Activated CD4-positive, alpha-beta T cell treated with anti-CD3 and anti-CD28 coated beads for 36 hours (primary cell): ENCODE measurements at regions of chr17 and their contacts with region 1.

Region 1: DNA sequence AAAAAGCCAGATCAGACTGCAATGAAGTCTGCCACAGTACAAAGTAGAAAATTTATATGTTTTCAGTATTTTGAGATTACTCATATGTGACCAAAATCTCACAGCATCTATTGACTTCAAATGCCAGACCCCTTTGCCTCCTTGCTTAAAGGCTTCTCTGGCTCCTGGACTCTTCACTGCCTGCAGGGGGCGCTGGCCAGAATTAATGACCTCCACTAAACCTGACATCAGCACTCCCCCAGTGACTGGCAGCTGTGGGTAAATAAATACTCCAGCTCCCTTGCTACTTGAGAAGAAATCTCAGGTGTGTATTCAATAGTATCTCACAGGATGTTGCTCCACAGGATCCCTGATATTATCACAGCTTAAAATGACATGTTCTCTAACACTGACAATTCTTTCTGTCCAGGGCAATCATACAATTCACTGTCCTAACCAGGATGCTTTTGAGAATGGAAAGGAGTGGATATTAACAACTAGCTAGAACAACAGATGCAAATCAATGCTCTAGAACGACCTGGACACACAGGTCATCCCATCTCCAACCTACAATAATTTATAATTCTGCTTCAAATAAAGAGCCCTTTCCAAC is 4.0 kb downstream of the BECN1 start:
- DNase-seq: peak; percentile 86
- ATAC-seq: peak; percentile 56
- H3K4me3 Mint-ChIP-seq: no peak overlapping the region
- H3K27ac Mint-ChIP-seq: no peak overlapping the region
- H3K4me1 Mint-ChIP-seq: peaks cover 28% of the 10 kb centered on the region
- H3K27me3 Mint-ChIP-seq: no peaks in the 10 kb centered on the region

Region 2: DNA sequence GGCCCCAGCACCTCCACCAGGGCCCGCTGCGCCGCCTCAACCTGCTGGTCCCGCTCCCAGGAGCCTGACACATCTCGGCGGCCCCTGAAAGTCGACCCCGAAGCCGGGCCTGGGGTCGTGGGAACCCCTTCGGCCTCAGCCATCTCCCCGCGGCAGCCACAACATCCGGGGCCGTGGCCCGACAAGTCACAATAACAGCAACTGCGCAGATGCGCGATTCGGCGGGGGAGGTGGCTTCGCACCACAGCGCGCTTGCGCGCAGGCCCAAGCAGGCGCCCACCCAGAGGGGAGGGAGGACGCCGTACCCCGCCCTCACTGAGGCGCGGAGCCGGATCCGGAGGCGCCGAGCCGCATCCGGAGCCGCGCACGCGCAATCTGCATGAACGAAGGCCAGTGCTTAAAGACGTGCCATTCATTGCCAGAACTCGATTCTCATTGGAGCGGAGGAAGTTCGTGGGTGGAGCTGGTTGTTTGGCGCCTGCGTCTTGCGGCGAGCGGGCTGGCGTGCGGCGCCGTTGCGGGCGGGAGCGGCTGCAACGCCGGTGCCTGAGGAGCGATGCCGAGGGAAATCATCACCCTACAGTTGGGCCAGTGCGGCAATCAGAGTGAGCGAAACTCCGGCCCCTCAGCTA is 210.7 kb before region 1 on chr17 and contains the starts of genes RETREG3 and TUBG1:
- CTCF ChIA-PET with region 1: interaction called, 3 read pairs
- POLR2A ChIA-PET with region 1: interaction called, 3 read pairs
- intact Hi-C with region 1: loop called in 1 of 2 experiments (anchors 1 kb)
- DNase-seq: peak; percentile 100
- ATAC-seq: peak; percentile 92
- H3K4me3 Mint-ChIP-seq: peak within 1 kb of the TSS; percentile 95
- H3K27ac Mint-ChIP-seq: peak within 1 kb of the TSS; percentile 97
- H3K4me1 Mint-ChIP-seq: peaks cover 35% of the 10 kb centered on the region
- H3K27me3 Mint-ChIP-seq: no peaks in the 10 kb centered on the region
- total RNA-seq, gene RETREG3: 28.3 to 30.9 TPM
- total RNA-seq, gene TUBG1: 76.1 to 102 TPM

Region 3: GRCh38 chr17:42744806-42745617 is 75.0 kb before region 1 on chr17 and contains the start of gene EZH1:
- CTCF ChIA-PET with region 1: no interaction called
- POLR2A ChIA-PET with region 1: no interaction called
- intact Hi-C with region 1: loop called in 1 of 2 experiments (anchors 1 kb)
- DNase-seq: peak; percentile 96
- ATAC-seq: peak; percentile 91
- H3K4me3 Mint-ChIP-seq: peak within 1 kb of the TSS; percentile 89
- H3K27ac Mint-ChIP-seq: peak within 1 kb of the TSS; percentile 98
- H3K4me1 Mint-ChIP-seq: peaks cover 19% of the 10 kb centered on the region
- H3K27me3 Mint-ChIP-seq: peaks cover 7% of the 10 kb centered on the region
- total RNA-seq, gene EZH1: 28.6 to 29.5 TPM

Region 4: DNA sequence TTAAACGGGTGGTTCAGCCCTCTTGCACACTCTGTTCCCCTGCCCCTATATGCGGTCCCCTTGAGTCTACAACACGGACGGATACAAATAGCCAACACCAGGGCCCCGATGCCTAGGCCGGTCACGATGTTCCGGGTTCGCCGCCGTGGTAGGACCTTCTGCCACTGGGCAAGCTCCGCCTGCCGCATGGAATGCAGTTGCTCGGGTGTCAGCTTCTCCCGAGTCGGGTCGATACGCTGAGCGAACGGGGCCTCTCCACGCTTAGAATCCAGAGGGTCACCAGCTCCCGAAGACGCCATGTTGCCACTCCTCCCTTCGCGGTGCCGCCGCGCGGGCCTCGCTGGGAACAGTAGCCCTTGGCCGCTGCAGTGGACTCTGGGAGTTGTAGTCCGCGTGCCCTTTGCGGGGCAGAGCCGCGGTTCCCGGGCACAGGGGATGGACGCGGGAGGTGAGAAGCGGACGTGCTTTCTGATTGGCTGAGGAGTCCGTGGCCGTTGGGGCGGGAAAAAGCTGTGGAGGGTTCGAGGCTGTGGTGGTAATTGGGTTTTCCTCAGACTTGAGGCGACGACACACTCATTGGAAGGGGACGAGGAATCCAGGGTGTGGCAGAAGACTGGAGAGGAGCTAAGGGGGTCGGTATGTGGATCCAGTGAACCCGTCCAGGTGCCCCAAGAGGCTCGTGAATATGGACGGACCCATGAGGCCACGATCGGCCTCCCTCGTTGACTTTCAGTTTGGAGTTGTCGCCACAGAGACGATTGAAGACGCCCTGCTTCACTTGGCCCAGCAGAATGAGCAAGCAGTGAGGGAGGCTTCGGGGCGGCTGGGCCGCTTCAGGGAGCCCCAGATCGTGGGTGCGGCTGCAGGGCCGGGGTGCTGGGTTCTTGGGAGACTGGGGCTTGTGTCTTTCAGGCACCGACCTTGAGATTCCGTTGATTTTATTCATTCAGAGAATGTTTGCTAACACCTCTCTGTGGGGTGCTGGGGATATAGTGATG is 21.4 kb before region 1 on chr17 and contains the starts of genes CNTD1 and COA3:
- CTCF ChIA-PET with region 1: interaction called, 9 read pairs
- POLR2A ChIA-PET with region 1: no interaction called
- intact Hi-C with region 1: loop called in 1 of 2 experiments (anchors 1 kb)
- DNase-seq: peak; percentile 92
- ATAC-seq: peak; percentile 100
- H3K4me3 Mint-ChIP-seq: peak within 1 kb of the TSS; percentile 87
- H3K27ac Mint-ChIP-seq: peak within 1 kb of the TSS; percentile 58
- H3K4me1 Mint-ChIP-seq: peaks cover 16% of the 10 kb centered on the region
- H3K27me3 Mint-ChIP-seq: no peaks in the 10 kb centered on the region
- total RNA-seq, gene CNTD1: not detected
- total RNA-seq, gene COA3: 30.1 to 31.4 TPM

Region 5: DNA sequence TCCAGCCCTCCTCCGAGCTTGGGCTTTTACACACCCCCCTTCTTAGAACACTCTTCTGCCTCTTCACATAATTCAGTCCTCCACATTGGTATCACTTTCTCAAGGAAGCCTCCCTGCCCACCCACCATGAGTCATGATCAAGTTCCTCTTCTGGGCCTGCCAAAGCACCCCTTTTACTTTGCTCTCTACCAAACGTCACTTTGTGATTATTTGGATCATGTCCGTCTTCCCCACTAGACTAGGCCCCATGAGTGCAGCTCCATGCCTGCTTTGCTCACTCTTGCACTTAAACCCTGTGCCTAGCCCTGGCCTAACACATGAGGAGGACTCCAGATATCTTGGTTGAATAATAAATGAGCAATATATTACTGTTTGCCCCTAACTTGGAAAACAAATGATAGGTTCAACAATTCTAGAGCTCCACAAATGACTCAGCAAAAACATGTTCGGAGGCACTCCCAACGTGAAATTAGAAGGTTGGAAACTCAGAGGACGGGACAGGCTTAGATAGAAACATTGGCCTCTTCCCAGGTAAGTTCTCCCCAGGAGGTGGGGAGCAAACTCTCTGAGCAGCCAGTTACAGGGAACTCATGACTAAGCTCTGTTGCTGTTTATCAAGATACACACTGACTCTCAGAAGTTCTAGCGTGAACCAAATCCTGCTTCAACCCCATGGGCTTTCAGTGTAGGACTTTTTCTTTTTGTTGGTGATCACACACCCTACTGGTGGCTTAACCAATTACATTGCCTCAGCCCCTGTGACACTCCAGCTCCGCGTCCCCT is 108.9 kb after region 1 on chr17:
- CTCF ChIA-PET with region 1: interaction called, 15 read pairs
- POLR2A ChIA-PET with region 1: interaction called, 3 read pairs
- intact Hi-C with region 1: loop called in 1 of 2 experiments (anchors 5 kb)
- DNase-seq: peak; percentile 60
- ATAC-seq: peak; percentile 94
- H3K4me3 Mint-ChIP-seq: peak overlapping the region; percentile 0
- H3K27ac Mint-ChIP-seq: peak overlapping the region; percentile 48
- H3K4me1 Mint-ChIP-seq: peaks cover 14% of the 10 kb centered on the region
- H3K27me3 Mint-ChIP-seq: peaks cover 4% of the 10 kb centered on the region

Region 6: DNA sequence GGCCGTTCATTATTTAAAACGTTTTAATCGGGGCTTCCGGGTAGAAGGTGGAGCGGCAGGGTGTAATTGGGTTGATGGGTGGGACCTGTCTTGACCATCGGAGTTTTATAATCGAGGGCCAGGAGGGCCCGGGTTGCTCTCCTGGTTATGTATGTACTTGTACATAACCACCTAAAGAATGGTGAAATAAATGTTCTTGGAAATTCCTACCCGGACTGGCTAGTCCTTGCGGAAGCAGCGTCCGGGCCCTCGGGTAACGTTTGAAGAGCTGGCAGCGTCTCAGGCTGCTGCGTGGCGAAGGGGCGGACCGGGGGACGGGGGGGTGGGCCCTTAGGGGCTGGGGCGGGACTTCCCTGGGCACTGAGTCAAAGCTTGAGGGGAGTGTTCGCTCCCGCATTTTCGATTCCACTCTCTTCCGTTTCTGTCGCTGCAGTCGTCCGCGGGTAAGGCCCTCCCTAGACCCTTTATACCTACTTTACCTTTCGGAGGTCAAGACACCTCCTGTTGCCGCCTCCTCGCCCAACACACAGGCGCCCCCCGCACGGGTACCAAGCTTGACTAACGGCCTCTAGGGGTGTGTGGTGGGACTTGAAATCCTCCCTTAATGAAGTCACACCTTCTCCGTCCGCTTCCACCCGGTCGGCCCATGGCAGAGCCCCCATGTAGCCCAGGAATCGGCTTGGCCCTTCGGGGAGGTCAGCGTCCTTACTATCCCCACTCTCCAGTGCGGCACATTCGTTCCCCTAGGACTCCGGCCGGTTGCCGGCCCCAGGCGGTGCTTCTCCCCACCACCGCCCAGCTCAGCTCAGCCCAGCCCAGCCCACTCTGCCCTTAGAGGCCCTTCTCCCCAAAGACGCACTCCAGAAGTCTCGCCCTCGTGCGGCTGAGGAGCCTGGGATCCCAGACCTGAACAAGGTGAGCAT is 391.7 kb after region 1 on chr17 and contains the start of gene TMEM106A:
- CTCF ChIA-PET with region 1: no interaction called
- POLR2A ChIA-PET with region 1: no interaction called
- intact Hi-C with region 1: loop called in 1 of 2 experiments (anchors 5 kb)
- DNase-seq: peak; percentile 88
- ATAC-seq: peak; percentile 92
- H3K4me3 Mint-ChIP-seq: peak within 1 kb of the TSS; percentile 83
- H3K27ac Mint-ChIP-seq: peak within 1 kb of the TSS; percentile 92
- H3K4me1 Mint-ChIP-seq: peaks cover 25% of the 10 kb centered on the region
- H3K27me3 Mint-ChIP-seq: no peaks in the 10 kb centered on the region
- total RNA-seq, gene TMEM106A: 10.7 to 10.8 TPM